ENCODE measurements at regions of chr6 and their contacts with region 1.

Region 1: DNA sequence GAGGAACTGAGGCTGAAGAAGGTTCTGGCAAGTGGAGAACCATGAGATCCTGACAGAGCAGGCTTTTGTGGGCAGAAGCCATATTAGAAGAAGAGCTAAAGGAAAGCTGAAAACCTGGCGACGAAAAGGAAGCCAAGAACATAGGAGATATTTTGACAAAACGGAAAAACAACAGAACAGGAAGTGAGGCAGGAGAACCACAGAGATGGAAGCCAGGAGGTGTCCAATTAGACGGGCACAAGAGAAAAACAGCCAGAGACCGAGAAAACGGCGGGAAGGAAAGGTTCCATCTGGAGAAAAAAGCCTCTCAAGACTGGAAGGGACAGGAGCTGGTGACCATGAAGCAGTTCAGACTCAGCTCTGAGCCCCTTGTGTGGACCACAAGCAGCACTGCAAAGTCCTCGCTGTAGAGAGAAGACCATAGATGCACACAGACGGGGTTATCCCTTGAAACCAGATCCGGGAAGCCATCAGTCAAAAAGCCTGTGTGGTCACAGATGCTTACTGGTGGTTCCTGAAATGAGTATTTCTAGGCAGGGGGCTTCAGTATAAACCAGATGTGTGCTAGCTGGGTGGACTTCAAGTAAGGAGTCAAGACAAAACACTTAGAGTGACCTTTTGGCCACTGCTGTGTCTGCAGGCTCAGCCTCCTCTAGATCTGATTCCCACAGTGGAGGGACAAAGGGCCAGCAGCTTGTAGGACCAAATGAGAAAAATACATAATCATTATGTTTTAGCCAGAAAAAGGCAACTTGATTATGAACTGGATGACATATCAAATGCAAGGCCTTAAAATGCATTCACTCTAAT is 30.7 kb downstream of the SSR1 start:
- DNase-seq: no peak
- ATAC-seq: no peak
- H3K4me3 ChIP-seq: no peak overlapping the region
- H3K27ac ChIP-seq: no peak overlapping the region
- H3K4me1 ChIP-seq: peaks cover 0 to 12% (median 11%) of the 10 kb centered on the region in 3 donors
- H3K27me3 ChIP-seq: no peaks in the 10 kb centered on the region
- CTCF ChIP-seq: no peak

Region 2: DNA sequence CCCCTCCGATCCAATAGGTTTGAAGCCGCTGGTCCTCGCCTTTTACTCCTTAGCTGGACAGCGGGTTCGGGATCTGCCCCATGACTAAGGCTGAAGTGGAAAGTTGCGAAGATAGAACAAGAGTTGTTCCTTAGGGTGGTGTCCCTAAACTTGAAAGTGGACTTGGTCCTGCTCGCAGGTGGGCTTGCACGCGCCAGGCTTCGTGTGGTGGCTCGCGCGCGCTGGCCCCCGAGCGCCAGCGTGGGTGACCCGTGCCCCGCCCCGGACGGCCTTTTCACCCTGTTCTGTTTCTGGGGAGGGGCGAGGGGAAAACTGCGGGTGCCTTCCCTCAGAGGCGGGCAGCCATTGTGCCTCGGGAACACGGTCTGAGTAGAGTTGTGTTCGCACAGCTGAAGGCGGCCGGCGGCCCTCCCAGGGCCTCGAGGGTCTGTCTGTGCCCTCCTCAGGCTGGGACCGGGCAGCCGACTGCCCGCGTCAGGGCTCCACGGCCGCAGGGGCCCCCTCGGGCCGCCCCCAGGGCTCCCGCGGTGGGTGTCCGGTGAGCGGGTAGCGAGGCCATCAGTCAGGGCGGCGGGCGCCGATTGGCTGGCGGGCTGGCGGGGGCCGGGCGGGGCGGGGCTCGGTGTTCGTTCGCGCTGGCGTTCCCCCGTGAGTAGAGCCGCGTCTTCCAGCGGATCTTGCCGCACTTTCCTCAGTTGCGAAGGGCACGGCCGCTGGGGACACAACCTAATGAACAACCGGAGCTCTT is 141.5 kb before region 1 on chr6:
- intact Hi-C with region 1: no loop called
- DNase-seq: peak; percentile 85 to 94 (median 90)
- ATAC-seq: peak; percentile 78 to 86 (median 82)
- H3K4me3 ChIP-seq: peak overlapping the region; percentile 11 to 55 (median 44)
- H3K27ac ChIP-seq: peak overlapping the region; percentile 95 to 98 (median 96)
- H3K4me1 ChIP-seq: peaks cover 61 to 69% (median 64%) of the 10 kb centered on the region in 3 donors
- H3K27me3 ChIP-seq: no peaks in the 10 kb centered on the region
- CTCF ChIP-seq: no peak

Region 3: DNA sequence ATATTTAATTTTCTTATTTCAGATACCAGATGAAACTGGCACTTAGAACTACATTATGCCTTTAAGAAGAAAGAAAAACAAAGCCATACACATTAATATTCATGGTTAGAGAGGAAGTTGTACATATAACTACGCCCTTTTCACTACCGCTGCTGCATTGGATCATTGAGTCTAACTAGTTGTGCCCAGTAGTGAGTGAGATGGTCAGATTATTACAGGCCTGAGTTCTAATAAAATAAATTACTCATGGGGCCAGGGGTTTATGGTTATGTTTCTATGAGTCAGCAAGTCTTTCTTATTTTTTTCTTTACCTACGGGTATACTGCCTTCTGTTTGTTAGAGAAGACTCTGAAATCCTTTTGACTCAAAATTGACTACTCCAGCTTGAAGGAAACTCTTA is 118.8 kb after region 1 on chr6:
- intact Hi-C with region 1: loop called in 1 of 3 experiments (anchors 10 kb)
- DNase-seq: no peak
- ATAC-seq: no peak
- H3K4me3 ChIP-seq: no peak overlapping the region
- H3K27ac ChIP-seq: no peak overlapping the region
- H3K4me1 ChIP-seq: no peaks in the 10 kb centered on the region
- H3K27me3 ChIP-seq: no peaks in the 10 kb centered on the region
- CTCF ChIP-seq: no peak

Region 4: GRCh38 chr6:7615611-7616383 is 333.5 kb after region 1 on chr6:
- intact Hi-C with region 1: loop called in 1 of 3 experiments (anchors 10 kb)
- DNase-seq: peak in 2 of 6 donors; percentile 33 to 59
- ATAC-seq: peak; percentile 76 to 88 (median 82)
- H3K4me3 ChIP-seq: no peak overlapping the region
- H3K27ac ChIP-seq: no peak overlapping the region
- H3K4me1 ChIP-seq: no peaks in the 10 kb centered on the region
- H3K27me3 ChIP-seq: no peaks in the 10 kb centered on the region
- CTCF ChIP-seq: peak; percentile 45 to 69 (median 52)

Measured in pancreas (tissue), 10 donors.